Motor neuron (in vitro differentiated cells): ENCODE measurements at regions of chr12 and their contacts with region 1.

Region 1: GRCh38 chr12:24561882-24562760 is 386.8 kb downstream of the BCAT1 start:
- ATAC-seq: peak; percentile 62 to 77 (median 74)
- H3K4me3 ChIP-seq: peak overlapping the region; percentile 56 to 93 (median 85)
- H3K27ac ChIP-seq: peak overlapping the region; percentile 70 to 73
- H3K4me1 ChIP-seq: peaks cover 4 to 11% of the 10 kb centered on the region in 2 donors

Region 2: GRCh38 chr12:24109381-24110039 is 452.6 kb before region 1 on chr12:
- in situ Hi-C with region 1: loop called in 1 of 9 experiments (anchors 25 kb)
- ATAC-seq: no peak
- H3K4me3 ChIP-seq: no peak overlapping the region
- H3K27ac ChIP-seq: no peak overlapping the region
- H3K4me1 ChIP-seq: peaks cover 0 to 8% of the 10 kb centered on the region in 2 donors